Transverse colon (tissue), 4 donors: ENCODE measurements at regions of chr6 and their contacts with region 1.

Region 1: GRCh38 chr6:149316798-149317655 is 485 bp upstream of the TAB2 start:
- DNase-seq: peak; percentile 90
- H3K4me3 ChIP-seq: peak overlapping the region; percentile 77 to 96 (median 91)
- H3K27ac ChIP-seq: peak overlapping the region; percentile 95 to 100 (median 99)
- H3K4me1 ChIP-seq: peaks cover 0 to 39% (median 28%) of the 10 kb centered on the region in 4 donors
- H3K27me3 ChIP-seq: no peaks in the 10 kb centered on the region
- CTCF ChIP-seq: peak in 1 of 5 experiments; percentile 41
- EP300 ChIP-seq: no peak
- POLR2A ChIP-seq: peak; percentile 83

Region 2: DNA sequence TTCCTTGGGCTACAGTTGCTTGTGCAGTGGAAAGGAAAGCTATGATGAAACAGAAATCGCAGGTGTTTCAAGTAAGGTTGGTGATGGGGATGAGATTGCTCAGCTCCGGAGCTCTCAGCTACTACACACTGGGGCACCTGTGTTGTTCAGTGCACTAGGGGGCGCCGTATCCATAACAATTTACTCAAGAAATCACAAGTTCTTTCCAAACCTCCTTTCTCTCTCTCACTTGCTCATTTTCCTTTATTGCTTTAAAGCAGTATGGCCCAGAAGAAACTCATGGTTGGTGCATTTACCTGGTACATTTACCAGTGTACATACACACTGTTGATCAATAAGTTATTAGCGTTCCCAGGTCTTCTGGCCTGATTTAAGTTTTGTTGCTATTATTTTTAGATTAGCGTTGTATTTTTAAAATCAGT is 234.7 kb before region 1 on chr6:
- in situ Hi-C with region 1: no loop called
- intact Hi-C with region 1: loop called (anchors 10 kb)
- DNase-seq: peak; percentile 87
- H3K4me3 ChIP-seq: no peak overlapping the region
- H3K27ac ChIP-seq: no peak overlapping the region
- H3K4me1 ChIP-seq: peaks cover 4 to 25% (median 8%) of the 10 kb centered on the region in 4 donors
- H3K27me3 ChIP-seq: no peaks in the 10 kb centered on the region
- CTCF ChIP-seq: peak; percentile 76 to 82 (median 80)
- EP300 ChIP-seq: no peak
- POLR2A ChIP-seq: no peak

Region 3: DNA sequence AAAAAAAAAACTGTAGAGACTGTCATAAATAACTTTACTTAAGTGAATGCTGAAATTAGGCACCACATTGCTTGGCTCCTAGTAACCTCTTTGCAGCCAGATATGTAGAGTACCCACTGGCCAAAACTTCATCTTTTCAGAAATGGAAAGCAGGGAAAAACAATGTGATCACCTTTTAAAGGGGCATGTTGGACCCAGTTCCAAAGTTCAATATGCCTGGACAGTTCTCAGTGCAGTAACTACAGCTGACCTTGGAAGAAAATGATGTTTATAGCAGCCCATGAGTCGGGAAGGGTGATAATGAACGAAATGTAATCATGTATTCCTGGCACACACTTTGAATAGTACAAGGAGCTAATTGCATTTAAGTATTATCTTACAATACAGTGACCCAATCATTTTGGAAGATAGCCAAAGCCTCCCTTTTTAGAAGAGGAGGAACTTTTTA is 93.1 kb before region 1 on chr6:
- in situ Hi-C with region 1: no loop called
- intact Hi-C with region 1: no loop called
- DNase-seq: no peak
- H3K4me3 ChIP-seq: no peak overlapping the region
- H3K27ac ChIP-seq: no peak overlapping the region
- H3K4me1 ChIP-seq: peaks cover 0 to 27% (median 12%) of the 10 kb centered on the region in 4 donors
- H3K27me3 ChIP-seq: no peaks in the 10 kb centered on the region
- CTCF ChIP-seq: no peak
- EP300 ChIP-seq: no peak
- POLR2A ChIP-seq: no peak

Region 4: DNA sequence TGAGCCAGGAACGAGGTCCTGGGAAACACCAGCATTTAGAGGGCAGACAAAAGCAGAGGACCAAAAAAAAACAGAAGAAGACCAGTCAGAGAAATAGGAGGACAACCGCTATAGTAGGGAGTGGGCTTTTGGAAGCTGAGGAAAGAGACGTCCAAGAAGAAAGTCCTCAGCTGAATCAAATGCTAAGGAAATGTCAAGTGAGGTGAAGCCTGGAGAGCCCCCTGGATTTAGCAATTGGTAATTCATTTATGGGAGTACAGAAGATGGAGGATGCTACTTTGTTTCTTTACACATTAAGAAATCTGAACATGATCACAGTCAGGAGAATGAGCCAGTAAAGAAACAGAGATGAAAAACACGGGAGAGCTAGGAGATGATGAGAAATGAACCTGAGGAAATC is 506.0 kb after region 1 on chr6:
- in situ Hi-C with region 1: no loop called
- intact Hi-C with region 1: no loop called
- DNase-seq: no peak
- H3K4me3 ChIP-seq: no peak overlapping the region
- H3K27ac ChIP-seq: no peak overlapping the region
- H3K4me1 ChIP-seq: no peaks in the 10 kb centered on the region
- H3K27me3 ChIP-seq: no peaks in the 10 kb centered on the region
- CTCF ChIP-seq: no peak
- EP300 ChIP-seq: no peak
- POLR2A ChIP-seq: no peak